ENCODE measurements at regions of chr5 and their contacts with region 1.

Region 1: DNA sequence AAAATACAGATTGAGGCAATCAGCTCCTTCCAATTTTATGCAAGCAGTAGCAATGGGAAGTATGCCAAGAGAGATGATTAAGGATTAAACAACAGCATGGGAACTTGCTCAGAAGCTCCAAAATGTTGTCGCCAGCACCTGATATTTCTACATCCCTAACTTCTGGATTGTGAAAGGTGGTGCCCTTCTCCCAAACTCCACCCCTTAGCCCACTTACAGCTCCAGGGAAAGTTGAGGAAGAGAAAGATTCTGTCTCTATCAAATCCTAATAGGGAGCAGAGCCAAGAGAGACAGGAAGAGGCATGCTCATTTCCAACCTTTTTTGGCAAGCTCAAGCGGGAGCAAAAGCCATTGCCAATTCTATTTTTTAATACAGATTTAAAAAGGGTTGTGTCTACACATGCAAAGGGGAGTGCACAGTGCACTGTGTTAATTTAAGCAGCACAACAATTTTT is 92.4 kb upstream of the NR3C1 start:
- DNase-seq: peak; percentile 100
- H3K4me3 Mint-ChIP-seq: peak overlapping the region; percentile 45
- H3K27ac Mint-ChIP-seq: peak overlapping the region; percentile 82
- H3K4me1 Mint-ChIP-seq: peaks cover 46% of the 10 kb centered on the region
- H3K27me3 Mint-ChIP-seq: no peaks in the 10 kb centered on the region
- CTCF ChIP-seq: no peak

Region 2: GRCh38 chr5:142726188-142726731 is 769.6 kb before region 1 on chr5:
- CTCF ChIA-PET with region 1: no interaction called
- POLR2A ChIA-PET with region 1: no interaction called
- intact Hi-C with region 1: no loop called
- DNase-seq: peak; percentile 93
- H3K4me3 Mint-ChIP-seq: no peak overlapping the region
- H3K27ac Mint-ChIP-seq: peak overlapping the region; percentile 86
- H3K4me1 Mint-ChIP-seq: peaks cover 28% of the 10 kb centered on the region
- H3K27me3 Mint-ChIP-seq: no peaks in the 10 kb centered on the region
- CTCF ChIP-seq: no peak

Region 3: DNA sequence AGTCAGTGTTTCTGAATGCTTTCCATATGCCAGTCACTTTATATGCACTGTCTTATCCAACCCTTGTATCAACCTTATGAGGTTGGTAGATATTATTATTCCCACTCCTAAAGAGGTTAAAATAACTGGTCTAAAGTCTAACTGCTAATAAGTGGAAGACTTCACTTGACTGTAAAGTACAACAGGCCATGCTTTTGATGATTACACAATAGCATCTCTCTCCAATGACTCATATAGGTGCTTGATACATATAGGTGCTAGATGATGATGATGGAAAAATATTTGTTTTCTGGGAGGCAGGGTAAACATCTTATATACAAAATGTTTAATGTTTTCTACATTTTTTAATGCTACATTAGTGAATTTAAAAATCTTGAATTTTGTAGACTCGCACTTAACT is 16.5 kb before region 1 on chr5:
- CTCF ChIA-PET with region 1: interaction called, 4 read pairs
- POLR2A ChIA-PET with region 1: interaction called, 22 read pairs
- intact Hi-C with region 1: no loop called
- DNase-seq: peak; percentile 69
- H3K4me3 Mint-ChIP-seq: no peak overlapping the region
- H3K27ac Mint-ChIP-seq: no peak overlapping the region
- H3K4me1 Mint-ChIP-seq: peaks cover 7% of the 10 kb centered on the region
- H3K27me3 Mint-ChIP-seq: no peaks in the 10 kb centered on the region
- CTCF ChIP-seq: no peak

Region 4: GRCh38 chr5:143506881-143507551 is 11.2 kb after region 1 on chr5:
- CTCF ChIA-PET with region 1: interaction called, 16 read pairs
- POLR2A ChIA-PET with region 1: interaction called, 182 read pairs
- intact Hi-C with region 1: no loop called
- DNase-seq: peak; percentile 98
- H3K4me3 Mint-ChIP-seq: peak overlapping the region; percentile 44
- H3K27ac Mint-ChIP-seq: peak overlapping the region; percentile 84
- H3K4me1 Mint-ChIP-seq: peaks cover 41% of the 10 kb centered on the region
- H3K27me3 Mint-ChIP-seq: no peaks in the 10 kb centered on the region
- CTCF ChIP-seq: peak; percentile 16

Region 5: GRCh38 chr5:143554187-143554717 is 58.4 kb after region 1 on chr5:
- CTCF ChIA-PET with region 1: interaction called, 3 read pairs
- POLR2A ChIA-PET with region 1: interaction called, 32 read pairs
- intact Hi-C with region 1: no loop called
- DNase-seq: peak; percentile 99
- H3K4me3 Mint-ChIP-seq: peak overlapping the region; percentile 0
- H3K27ac Mint-ChIP-seq: peak overlapping the region; percentile 81
- H3K4me1 Mint-ChIP-seq: peaks cover 41% of the 10 kb centered on the region
- H3K27me3 Mint-ChIP-seq: no peaks in the 10 kb centered on the region
- CTCF ChIP-seq: no peak

Region 6: DNA sequence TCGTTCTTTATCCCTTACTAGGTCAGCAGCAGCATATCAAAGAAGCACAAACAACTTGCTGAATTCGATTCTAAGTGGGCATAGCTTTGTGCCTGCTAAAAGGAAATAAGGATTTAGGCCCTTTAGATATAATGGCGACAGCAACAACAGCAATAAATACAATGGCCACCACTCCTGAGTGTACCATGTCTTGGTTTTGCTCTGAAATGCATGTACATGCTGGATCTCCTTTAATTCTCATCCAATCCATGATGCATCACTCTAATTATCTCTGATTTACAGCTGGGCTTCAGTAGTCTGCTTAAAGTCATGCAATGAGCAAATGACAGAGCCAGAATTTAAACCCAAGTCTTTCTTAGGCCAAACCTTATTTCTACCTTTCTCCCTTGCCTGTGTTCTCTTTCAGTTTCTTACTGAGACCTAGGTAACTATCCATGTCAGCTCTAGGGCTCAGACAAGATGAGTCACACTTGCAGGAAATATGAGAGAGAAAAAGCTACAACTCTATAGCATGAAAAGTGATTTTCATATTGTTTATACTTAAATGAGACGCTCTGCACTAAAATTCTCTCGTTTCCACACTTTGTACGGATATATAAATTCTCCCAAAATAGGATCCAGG is 427.9 kb after region 1 on chr5:
- CTCF ChIA-PET with region 1: no interaction called
- POLR2A ChIA-PET with region 1: interaction called, 11 read pairs
- intact Hi-C with region 1: no loop called
- DNase-seq: peak; percentile 78
- H3K4me3 Mint-ChIP-seq: peak overlapping the region; percentile 1
- H3K27ac Mint-ChIP-seq: peak overlapping the region; percentile 69
- H3K4me1 Mint-ChIP-seq: peaks cover 39% of the 10 kb centered on the region
- H3K27me3 Mint-ChIP-seq: no peaks in the 10 kb centered on the region
- CTCF ChIP-seq: no peak

Measured in MCF 10A (cell line).